ENCODE measurements at regions of chr1 and their contacts with region 1.

Region 1: GRCh38 chr1:152459596-152460528 is 45.8 kb upstream of the CRNN start:
- DNase-seq: peak; percentile 64
- ATAC-seq: peak; percentile 80
- H3K4me3 ChIP-seq: no peak overlapping the region
- H3K27ac ChIP-seq: no peak overlapping the region
- H3K4me1 ChIP-seq: peaks cover 0 to 11% of the 10 kb centered on the region in 2 experiments; a peak in 2 of 4 replicates
- H3K27me3 ChIP-seq: no peaks in the 10 kb centered on the region
- CTCF ChIP-seq: peak; percentile 39 to 88 (median 88); a peak in 4 of 6 replicates
- POLR2A ChIP-seq: no peak
- RAD21 ChIP-seq: no peak; the same call in 1 of the 2 replicates

Region 2: GRCh38 chr1:152001391-152002249 is 458.2 kb before region 1 on chr1:
- CTCF ChIA-PET with region 1: interaction called, 10 read pairs
- POLR2A ChIA-PET with region 1: no interaction called
- RAD21 ChIA-PET with region 1: no interaction called
- intact Hi-C with region 1: no loop called
- DNase-seq: peak; percentile 85
- ATAC-seq: peak; percentile 79
- H3K4me3 ChIP-seq: no peak overlapping the region
- H3K27ac ChIP-seq: no peak overlapping the region
- H3K4me1 ChIP-seq: peaks cover 4 to 19% of the 10 kb centered on the region in 2 experiments; a peak in 3 of 4 replicates
- H3K27me3 ChIP-seq: no peaks in the 10 kb centered on the region
- CTCF ChIP-seq: peak; percentile 91 to 95 (median 92)
- POLR2A ChIP-seq: no peak
- RAD21 ChIP-seq: peak; percentile 96

Region 3: GRCh38 chr1:152141974-152142584 is 317.8 kb before region 1 on chr1:
- CTCF ChIA-PET with region 1: interaction called, 14 read pairs
- POLR2A ChIA-PET with region 1: no interaction called
- RAD21 ChIA-PET with region 1: no interaction called
- intact Hi-C with region 1: loop called (anchors 2 kb)
- DNase-seq: peak; percentile 63
- ATAC-seq: peak; percentile 91
- H3K4me3 ChIP-seq: no peak overlapping the region
- H3K27ac ChIP-seq: no peak overlapping the region
- H3K4me1 ChIP-seq: no peaks in the 10 kb centered on the region
- H3K27me3 ChIP-seq: peaks cover 26% of the 10 kb centered on the region
- CTCF ChIP-seq: peak; percentile 80 to 94 (median 93)
- POLR2A ChIP-seq: no peak
- RAD21 ChIP-seq: peak; percentile 97

Region 4: DNA sequence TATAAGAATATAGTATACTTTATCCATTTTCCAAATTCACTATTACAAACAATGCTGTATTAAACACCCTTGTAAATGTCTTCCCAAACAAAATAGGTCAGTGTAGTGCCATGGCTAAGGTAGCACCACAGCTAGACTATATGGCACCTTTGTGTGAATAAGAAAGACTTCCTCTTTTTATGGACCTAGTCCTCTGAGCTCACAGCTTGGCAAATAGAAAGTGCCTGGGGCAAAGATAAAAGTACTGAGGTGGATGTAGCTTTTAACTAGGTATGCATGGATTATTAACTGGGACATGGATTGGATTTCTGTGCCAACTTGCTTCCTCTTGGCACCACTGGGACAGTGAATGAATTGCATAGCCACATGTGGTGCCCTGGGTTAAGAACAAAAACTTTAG is 260.9 kb before region 1 on chr1:
- CTCF ChIA-PET with region 1: interaction called, 13 read pairs
- POLR2A ChIA-PET with region 1: no interaction called
- RAD21 ChIA-PET with region 1: no interaction called
- intact Hi-C with region 1: no loop called
- DNase-seq: no peak
- ATAC-seq: no peak
- H3K4me3 ChIP-seq: no peak overlapping the region
- H3K27ac ChIP-seq: no peak overlapping the region
- H3K4me1 ChIP-seq: no peaks in the 10 kb centered on the region
- H3K27me3 ChIP-seq: peaks cover 18% of the 10 kb centered on the region
- CTCF ChIP-seq: no peak
- POLR2A ChIP-seq: no peak
- RAD21 ChIP-seq: no peak

Region 5: GRCh38 chr1:152440635-152441471 is 19.0 kb before region 1 on chr1:
- CTCF ChIA-PET with region 1: interaction called, 27 read pairs
- POLR2A ChIA-PET with region 1: no interaction called
- RAD21 ChIA-PET with region 1: interaction called in 1 of 2 experiments, 4 read pairs
- intact Hi-C with region 1: no loop called
- DNase-seq: peak; percentile 63
- ATAC-seq: peak; percentile 99
- H3K4me3 ChIP-seq: no peak overlapping the region
- H3K27ac ChIP-seq: no peak overlapping the region
- H3K4me1 ChIP-seq: peaks cover 0 to 14% of the 10 kb centered on the region in 2 experiments; a peak in 2 of 4 replicates
- H3K27me3 ChIP-seq: peaks cover 6% of the 10 kb centered on the region; the same call in 1 of the 2 replicates
- CTCF ChIP-seq: peak; percentile 85 to 93 (median 92)
- POLR2A ChIP-seq: no peak
- RAD21 ChIP-seq: peak; percentile 83

Region 6: DNA sequence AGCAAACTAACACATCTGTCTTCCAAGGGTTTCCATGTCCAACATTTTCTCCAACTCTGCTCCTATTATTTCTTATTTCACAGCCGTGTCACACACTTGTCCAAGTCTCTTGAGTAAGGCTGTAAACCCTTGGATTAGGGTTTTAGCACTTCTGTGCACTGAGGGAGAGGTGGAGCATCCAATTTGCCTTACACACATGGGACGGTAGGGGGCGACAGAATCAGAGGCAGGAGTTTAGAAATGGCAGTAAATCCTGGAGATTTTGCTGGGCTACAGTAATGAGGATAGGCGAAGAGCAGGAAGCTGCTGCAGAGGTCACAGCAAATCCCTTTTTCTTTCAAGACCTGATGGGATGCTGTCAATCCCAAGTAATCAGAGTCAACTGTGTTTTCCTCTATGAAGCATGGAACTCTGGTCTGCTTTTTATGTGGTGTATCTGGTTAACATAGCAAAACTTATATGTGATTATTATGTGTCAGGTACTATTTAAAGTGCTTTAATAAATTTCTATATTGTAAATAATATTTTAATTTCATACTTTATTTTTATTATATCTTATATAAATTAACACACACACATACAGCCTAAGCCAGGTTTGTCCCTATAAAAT is 35.3 kb after region 1 on chr1:
- CTCF ChIA-PET with region 1: interaction called, 11 read pairs
- POLR2A ChIA-PET with region 1: no interaction called
- RAD21 ChIA-PET with region 1: no interaction called
- intact Hi-C with region 1: no loop called
- DNase-seq: no peak
- ATAC-seq: peak; percentile 84
- H3K4me3 ChIP-seq: no peak overlapping the region
- H3K27ac ChIP-seq: no peak overlapping the region
- H3K4me1 ChIP-seq: no peaks in the 10 kb centered on the region
- H3K27me3 ChIP-seq: no peaks in the 10 kb centered on the region
- CTCF ChIP-seq: peak; percentile 44 to 78 (median 71); a peak in 5 of 6 replicates
- POLR2A ChIP-seq: no peak
- RAD21 ChIP-seq: peak; percentile 43; the same call in 1 of the 2 replicates